ENCODE measurements at regions of chr11 and their contacts with region 1.

Region 1: GRCh38 chr11:18012863-18013781 is at the start of gene SERGEF:
- DNase-seq: peak; percentile 96
- ATAC-seq: peak; percentile 94
- H3K4me3 Mint-ChIP-seq: peak within 1 kb of the TSS; percentile 100
- H3K27ac Mint-ChIP-seq: peak within 1 kb of the TSS; percentile 99
- H3K4me1 Mint-ChIP-seq: peaks cover 16% of the 10 kb centered on the region
- H3K27me3 Mint-ChIP-seq: no peaks in the 10 kb centered on the region
- CTCF ChIP-seq: no peak
- total RNA-seq, gene SERGEF: 38.4 and 47.4 TPM in 2 replicates

Region 2: GRCh38 chr11:17699147-17700114 is 313.7 kb before region 1 on chr11:
- CTCF ChIA-PET with region 1: no interaction called
- POLR2A ChIA-PET with region 1: no interaction called
- intact Hi-C with region 1: no loop called
- DNase-seq: no peak
- ATAC-seq: no peak
- H3K4me3 Mint-ChIP-seq: no peak overlapping the region
- H3K27ac Mint-ChIP-seq: no peak overlapping the region
- H3K4me1 Mint-ChIP-seq: no peaks in the 10 kb centered on the region
- H3K27me3 Mint-ChIP-seq: peaks cover 22% of the 10 kb centered on the region
- CTCF ChIP-seq: no peak

Region 3: DNA sequence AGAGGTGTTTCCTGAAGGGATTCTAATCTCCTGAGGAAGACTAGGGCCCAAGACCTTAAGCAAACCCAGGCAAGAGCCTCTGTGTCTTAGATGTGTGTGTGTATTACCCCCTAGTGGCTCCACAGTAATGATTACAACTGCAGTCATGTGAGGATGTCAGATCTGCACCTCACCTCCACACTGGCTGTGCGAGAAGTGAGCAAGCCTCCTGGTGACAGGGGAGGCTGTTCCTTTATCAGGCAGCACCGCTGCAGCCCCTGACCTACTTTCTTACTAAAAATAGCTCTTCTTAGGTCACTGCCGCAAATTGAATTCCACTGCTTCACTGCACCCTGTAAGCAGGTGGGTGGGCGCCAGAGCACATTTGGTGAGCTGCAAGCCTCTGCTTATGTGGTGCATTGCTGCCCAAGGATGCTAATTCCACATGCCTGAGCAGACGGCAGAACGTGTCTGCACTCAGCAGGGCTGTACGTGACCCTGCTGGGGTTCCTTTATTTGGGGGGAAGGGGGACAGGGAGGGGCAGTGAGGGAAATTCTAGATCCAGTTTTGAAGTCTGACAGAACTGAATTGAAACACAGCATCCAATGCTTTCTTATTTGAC is 166.2 kb before region 1 on chr11:
- CTCF ChIA-PET with region 1: no interaction called
- POLR2A ChIA-PET with region 1: no interaction called
- intact Hi-C with region 1: no loop called
- DNase-seq: no peak
- ATAC-seq: no peak
- H3K4me3 Mint-ChIP-seq: no peak overlapping the region
- H3K27ac Mint-ChIP-seq: no peak overlapping the region
- H3K4me1 Mint-ChIP-seq: no peaks in the 10 kb centered on the region
- H3K27me3 Mint-ChIP-seq: no peaks in the 10 kb centered on the region
- CTCF ChIP-seq: no peak

Region 4: DNA sequence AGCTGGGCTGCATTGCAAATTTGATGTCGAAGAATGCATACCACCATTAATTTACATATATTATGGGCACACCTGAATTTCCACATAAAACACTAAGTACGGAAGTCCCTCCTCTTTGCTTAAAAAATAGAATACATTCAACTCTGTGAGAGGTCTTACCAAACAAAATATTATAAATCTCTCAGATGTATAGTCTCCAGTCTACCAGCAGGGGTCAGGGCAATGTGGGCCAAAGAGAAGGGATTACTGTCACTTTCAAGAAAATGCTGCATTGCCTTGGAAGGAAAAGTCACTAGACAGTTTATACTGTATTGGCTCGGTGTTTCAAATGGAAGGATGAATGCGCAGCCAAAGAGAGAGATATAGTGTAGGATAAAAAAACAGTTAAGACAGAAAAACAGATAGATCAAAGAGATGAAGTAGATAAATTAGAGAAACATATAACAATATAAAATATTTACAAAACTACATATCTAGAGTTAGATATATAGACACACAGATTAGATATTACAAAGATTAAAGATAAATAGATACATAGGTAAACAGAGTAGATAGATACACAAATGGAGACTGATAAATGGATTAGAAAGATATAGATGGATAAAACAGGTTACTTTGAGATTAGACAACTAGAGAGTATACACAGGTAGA is 21.2 kb before region 1 on chr11:
- CTCF ChIA-PET with region 1: interaction called, 4 read pairs
- POLR2A ChIA-PET with region 1: no interaction called
- intact Hi-C with region 1: loop called (anchors 2 kb)
- DNase-seq: no peak
- ATAC-seq: peak; percentile 74
- H3K4me3 Mint-ChIP-seq: no peak overlapping the region
- H3K27ac Mint-ChIP-seq: no peak overlapping the region
- H3K4me1 Mint-ChIP-seq: no peaks in the 10 kb centered on the region
- H3K27me3 Mint-ChIP-seq: no peaks in the 10 kb centered on the region
- CTCF ChIP-seq: peak; percentile 99

Region 5: GRCh38 chr11:18105802-18106574 is 92.9 kb after region 1 on chr11 and contains the start of gene SAAL1:
- CTCF ChIA-PET with region 1: interaction called, 6 read pairs
- POLR2A ChIA-PET with region 1: interaction called, 14 read pairs
- intact Hi-C with region 1: loop called (anchors 1 kb)
- DNase-seq: peak; percentile 91
- ATAC-seq: peak; percentile 97
- H3K4me3 Mint-ChIP-seq: peak within 1 kb of the TSS; percentile 91
- H3K27ac Mint-ChIP-seq: peak within 1 kb of the TSS; percentile 76
- H3K4me1 Mint-ChIP-seq: peaks cover 28% of the 10 kb centered on the region
- H3K27me3 Mint-ChIP-seq: peaks cover 14% of the 10 kb centered on the region
- CTCF ChIP-seq: no peak
- total RNA-seq, gene SAAL1: 34.4 and 39.7 TPM in 2 replicates

Region 6: GRCh38 chr11:18151581-18151980 is 138.5 kb after region 1 on chr11:
- CTCF ChIA-PET with region 1: no interaction called
- POLR2A ChIA-PET with region 1: no interaction called
- intact Hi-C with region 1: no loop called
- DNase-seq: no peak
- ATAC-seq: no peak
- H3K4me3 Mint-ChIP-seq: no peak overlapping the region
- H3K27ac Mint-ChIP-seq: no peak overlapping the region
- H3K4me1 Mint-ChIP-seq: no peaks in the 10 kb centered on the region
- H3K27me3 Mint-ChIP-seq: peaks cover 17% of the 10 kb centered on the region
- CTCF ChIP-seq: no peak

Region 7: DNA sequence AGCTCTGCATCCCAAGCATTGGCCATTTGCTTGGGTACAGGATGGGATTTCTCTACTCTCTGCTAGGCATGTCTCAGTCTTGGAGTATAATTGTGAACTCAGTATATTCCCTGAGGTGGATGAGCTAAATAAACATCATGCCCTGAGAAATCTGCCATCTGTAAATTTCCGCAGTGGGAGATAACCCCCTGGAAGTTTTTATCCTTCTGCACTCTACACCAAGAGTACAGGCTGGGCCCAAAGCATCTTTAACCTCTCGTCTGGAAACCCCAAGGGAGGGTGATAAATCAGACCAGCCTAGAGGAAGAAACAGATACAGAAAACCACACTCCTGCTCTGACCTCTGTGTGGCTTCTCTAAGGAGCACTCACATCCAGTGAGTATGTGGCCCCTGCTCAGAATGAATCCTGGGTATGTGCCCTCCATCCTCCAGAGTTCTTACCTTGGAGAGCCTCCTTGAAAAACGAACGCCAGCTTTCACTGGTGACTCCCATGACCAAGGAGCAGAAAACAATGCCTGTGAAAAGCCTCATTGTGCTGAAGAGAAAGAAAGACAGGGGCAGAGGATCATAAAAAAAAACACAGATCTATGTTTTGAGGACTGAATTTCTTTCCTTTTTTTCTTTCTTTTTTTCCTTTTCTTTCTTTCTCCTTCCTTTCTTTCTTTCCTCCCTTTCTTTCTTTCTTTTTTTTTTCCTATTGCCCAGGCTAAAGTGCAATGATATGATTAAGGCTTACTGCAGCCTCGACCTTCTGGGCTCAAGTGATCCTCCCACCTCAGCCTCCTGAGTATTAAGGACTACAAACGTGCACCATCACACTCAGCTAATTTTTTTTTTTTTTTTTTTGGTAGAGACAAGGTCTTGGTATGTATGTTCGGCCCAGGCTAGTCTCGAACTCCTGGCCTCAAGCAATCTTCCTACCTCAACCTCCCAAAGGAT is 222.5 kb after region 1 on chr11:
- CTCF ChIA-PET with region 1: no interaction called
- POLR2A ChIA-PET with region 1: no interaction called
- intact Hi-C with region 1: loop called (anchors 10 kb)
- DNase-seq: no peak
- ATAC-seq: no peak
- H3K4me3 Mint-ChIP-seq: no peak overlapping the region
- H3K27ac Mint-ChIP-seq: no peak overlapping the region
- H3K4me1 Mint-ChIP-seq: no peaks in the 10 kb centered on the region
- H3K27me3 Mint-ChIP-seq: peaks cover 30% of the 10 kb centered on the region
- CTCF ChIP-seq: no peak

Region 8: DNA sequence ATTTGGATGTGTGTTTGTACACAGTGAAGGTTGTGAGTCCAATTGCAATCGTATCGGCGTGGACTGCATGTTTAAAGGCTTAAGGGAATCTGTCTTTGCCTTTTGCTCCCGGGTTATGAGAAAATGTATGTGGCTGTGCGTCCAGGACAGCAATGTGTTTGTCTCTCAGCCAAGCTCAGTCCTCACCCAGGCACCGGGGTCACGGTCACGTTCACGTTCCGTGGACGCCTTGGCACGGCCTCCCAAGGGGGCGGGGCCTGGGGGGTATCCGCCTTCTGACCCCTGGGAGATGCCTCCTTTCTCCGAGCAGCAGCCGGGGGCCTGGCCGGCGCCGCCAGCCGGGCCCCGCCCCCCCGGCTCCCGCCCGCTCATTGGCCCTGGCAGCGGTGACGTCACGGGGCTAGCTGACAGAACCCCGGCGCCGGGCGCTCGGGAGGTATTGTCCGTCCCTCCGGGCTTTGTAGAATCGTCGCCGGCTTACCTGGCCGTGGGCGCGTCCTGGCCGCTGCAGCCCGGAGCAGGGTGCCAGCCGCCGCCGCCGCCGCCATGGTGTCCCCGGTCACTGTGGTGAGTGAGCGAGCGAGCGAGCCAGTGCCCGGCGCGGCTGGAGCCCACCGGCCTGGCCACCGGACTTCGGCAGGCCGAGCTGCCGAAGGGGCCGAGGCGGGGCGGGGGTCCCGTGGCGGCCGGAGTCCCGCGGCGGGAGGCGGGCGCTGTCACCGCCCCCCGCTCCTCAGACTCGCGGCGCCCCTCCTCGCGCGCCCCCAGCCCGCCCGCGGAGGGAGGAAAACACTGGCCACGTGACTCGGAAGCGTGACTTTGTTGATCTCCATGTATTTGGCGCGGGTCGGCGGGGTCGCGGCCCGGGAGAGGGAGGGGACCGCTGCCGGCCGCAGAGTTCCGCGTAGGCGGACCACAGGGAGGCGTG is 685.5 kb after region 1 on chr11 and contains the start of gene TMEM86A:
- CTCF ChIA-PET with region 1: no interaction called
- POLR2A ChIA-PET with region 1: no interaction called
- intact Hi-C with region 1: loop called (anchors 2 kb)
- DNase-seq: peak; percentile 83
- ATAC-seq: peak; percentile 98
- H3K4me3 Mint-ChIP-seq: peak within 1 kb of the TSS; percentile 80
- H3K27ac Mint-ChIP-seq: no peak within 1 kb of the TSS
- H3K4me1 Mint-ChIP-seq: peaks cover 17% of the 10 kb centered on the region
- H3K27me3 Mint-ChIP-seq: peaks cover 5% of the 10 kb centered on the region
- CTCF ChIP-seq: no peak
- total RNA-seq, gene TMEM86A: 0.10 and 0.13 TPM in 2 replicates

Region 9: DNA sequence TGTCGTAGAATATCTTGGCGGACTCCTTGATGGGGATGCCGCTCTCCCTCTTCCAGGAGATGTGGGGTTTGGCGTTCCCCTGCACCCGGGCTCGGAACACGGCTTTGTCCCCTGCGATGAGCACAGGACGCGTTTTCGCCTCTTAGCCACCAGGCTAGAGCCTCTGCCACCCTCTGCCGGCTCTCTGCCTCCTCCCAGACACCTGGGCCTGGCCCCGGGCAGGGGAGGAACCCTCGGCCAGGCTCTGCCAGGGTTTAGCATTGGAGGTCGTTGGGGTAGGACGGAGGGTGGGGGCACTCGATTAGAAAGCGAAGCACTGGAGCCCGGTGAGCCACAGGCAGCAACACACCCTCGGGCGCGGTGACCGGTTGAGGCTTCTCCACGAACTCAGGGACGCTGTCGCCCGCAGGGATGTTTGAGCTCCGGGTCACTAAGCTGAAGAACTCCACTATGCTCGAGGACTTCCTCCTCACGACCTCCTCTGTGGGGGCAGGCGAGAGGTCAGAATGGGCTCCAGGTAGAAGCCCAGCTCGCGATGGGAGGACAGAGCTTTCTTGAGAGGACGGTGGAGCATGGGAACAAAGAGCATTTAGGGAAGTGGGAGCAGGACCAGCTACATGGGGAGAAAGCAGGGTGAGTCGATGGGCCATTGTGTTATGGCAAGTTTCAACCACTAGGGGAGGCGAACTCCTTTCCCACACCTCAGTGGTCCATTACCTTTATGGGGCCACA is 708.6 kb after region 1 on chr11:
- CTCF ChIA-PET with region 1: no interaction called
- POLR2A ChIA-PET with region 1: no interaction called
- intact Hi-C with region 1: loop called (anchors 10 kb)
- DNase-seq: peak; percentile 45
- ATAC-seq: peak; percentile 56
- H3K4me3 Mint-ChIP-seq: peak overlapping the region; percentile 92
- H3K27ac Mint-ChIP-seq: peak overlapping the region; percentile 46
- H3K4me1 Mint-ChIP-seq: peaks cover 12% of the 10 kb centered on the region
- H3K27me3 Mint-ChIP-seq: no peaks in the 10 kb centered on the region
- CTCF ChIP-seq: peak; percentile 39